PC-9 (cell line): ENCODE measurements at regions of chr1 and their contacts with region 1.

Region 1: DNA sequence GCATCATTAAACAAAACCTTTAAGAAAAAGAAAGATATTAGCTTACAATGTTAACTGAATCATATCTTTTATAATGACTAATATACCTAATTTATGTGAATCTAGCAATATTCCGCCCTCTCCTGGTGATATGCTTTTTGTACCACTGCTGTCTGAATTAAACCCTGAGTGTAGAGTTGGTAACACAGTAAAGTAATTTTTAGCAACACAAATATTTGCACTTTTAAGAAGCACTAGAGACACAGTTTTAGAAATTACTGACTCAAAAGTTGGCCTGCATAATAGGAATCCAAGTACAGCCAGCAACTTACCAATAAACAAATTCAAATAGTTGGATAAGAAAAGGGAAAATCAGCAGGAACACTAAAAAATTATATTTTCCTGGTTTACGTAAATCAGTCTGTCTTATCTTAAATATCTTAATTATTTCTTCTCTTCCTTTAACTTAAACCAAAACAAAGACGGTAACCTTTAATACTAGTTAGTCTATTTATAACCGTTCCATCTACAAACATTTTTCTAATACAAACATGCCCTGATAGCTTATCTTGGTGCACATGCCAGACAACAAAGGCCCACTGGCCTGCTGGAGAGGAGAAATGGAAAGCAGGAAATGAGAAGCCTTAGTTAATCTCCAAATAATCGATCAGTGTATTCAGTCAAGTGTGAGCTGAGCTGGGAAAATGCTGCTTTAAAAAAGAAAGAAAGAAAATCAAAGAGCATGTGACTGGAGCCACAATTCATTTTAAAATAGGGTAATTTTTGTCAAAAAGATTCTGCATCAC is 246.0 kb downstream of the RERE start:
- DNase-seq: peak in 1 of 2 experiments; percentile 58
- H3K4me3 ChIP-seq: no peak overlapping the region
- H3K27ac ChIP-seq: peak overlapping the region; percentile 24
- H3K4me1 ChIP-seq: peaks cover 38% of the 10 kb centered on the region
- H3K27me3 ChIP-seq: no peaks in the 10 kb centered on the region
- CTCF ChIP-seq: peak; percentile 36; the same call in 1 of the 2 replicates

Region 2: GRCh38 chr1:8687039-8687438 is 115.6 kb after region 1 on chr1:
- CTCF ChIA-PET with region 1: no interaction called
- POLR2A ChIA-PET with region 1: interaction called, 11 read pairs
- intact Hi-C with region 1: no loop called
- DNase-seq: no peak
- H3K4me3 ChIP-seq: no peak overlapping the region
- H3K27ac ChIP-seq: no peak overlapping the region
- H3K4me1 ChIP-seq: peaks cover 13% of the 10 kb centered on the region
- H3K27me3 ChIP-seq: no peaks in the 10 kb centered on the region
- CTCF ChIP-seq: no peak